Activated T-helper 2 cell treated with anti-CD3 and anti-CD28 coated beads, Interferon-gamma antibody, Interleukin-2, Interleukin-4, amounts not matched to agents 10 μg/mL and 5 μg/mL and 100 μg/mL, durations not matched to agents 14 hours and 24 hours and 36 hours (primary cell): ENCODE measurements at regions of chr21 and their contacts with region 1.

Region 1: DNA sequence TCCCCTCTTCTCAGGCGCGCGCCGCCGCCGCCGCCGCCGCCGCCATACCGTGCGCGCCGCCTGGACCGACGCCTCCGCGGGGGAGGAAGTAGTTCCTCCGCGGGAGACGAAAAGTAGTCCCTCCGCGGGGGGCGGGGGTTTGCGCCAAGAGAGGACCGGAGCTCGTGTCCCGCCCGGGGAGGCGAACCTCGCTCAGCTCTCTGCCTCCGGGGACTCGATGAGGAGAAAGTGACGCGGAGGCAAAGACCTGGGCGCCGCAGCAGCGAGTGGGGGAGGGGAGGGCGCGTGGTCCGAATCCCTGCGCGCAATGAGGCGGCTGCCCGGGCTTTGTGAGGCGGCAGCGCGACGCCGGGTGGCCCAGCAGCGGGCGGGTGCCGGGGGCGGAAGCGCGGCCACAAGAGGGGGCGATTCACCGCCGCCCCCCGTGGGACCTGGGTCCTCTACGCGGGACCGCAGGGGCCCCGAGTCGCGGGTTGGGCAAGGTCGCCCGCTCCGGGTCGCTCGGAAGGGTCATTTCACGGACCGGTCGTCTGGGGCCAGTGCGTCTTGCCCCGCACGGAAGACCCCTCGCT is at the start of gene BRWD1:
- DNase-seq: peak; percentile 83
- H3K4me3 Mint-ChIP-seq: peak within 1 kb of the TSS; percentile 93
- H3K27ac Mint-ChIP-seq: peak within 1 kb of the TSS; percentile 98
- H3K4me1 Mint-ChIP-seq: peaks cover 31% of the 10 kb centered on the region
- H3K27me3 Mint-ChIP-seq: no peaks in the 10 kb centered on the region
- total RNA-seq, gene BRWD1: 34.8 and 36.0 TPM in 2 replicates

Region 2: DNA sequence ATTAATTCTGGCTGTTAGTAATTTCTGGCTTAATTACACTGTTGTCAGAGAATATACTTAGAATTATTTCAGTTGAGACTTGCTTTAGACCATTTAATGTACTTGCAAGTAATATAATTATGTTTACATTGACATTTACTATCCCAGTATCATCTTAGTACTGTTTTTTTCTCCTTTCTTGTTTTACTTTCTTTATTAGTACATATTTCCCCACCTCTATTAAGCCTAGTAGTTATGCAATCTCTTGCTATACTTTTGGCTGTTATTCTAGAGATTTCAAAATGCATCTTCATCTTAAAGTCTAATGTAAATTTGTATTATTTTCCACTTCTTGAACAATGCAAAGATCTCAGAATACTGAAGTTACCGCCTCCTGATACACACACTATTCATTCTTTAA is 24.7 kb before region 1 on chr21:
- intact Hi-C with region 1: no loop called
- DNase-seq: no peak
- H3K4me3 Mint-ChIP-seq: no peak overlapping the region
- H3K27ac Mint-ChIP-seq: no peak overlapping the region
- H3K4me1 Mint-ChIP-seq: no peaks in the 10 kb centered on the region
- H3K27me3 Mint-ChIP-seq: no peaks in the 10 kb centered on the region

Region 3: GRCh38 chr21:39349211-39350093 is 35.8 kb after region 1 on chr21:
- intact Hi-C with region 1: loop called (anchors 1 kb)
- DNase-seq: peak; percentile 97
- H3K4me3 Mint-ChIP-seq: peak overlapping the region; percentile 99
- H3K27ac Mint-ChIP-seq: peak overlapping the region; percentile 100
- H3K4me1 Mint-ChIP-seq: peaks cover 32% of the 10 kb centered on the region
- H3K27me3 Mint-ChIP-seq: peaks cover 4% of the 10 kb centered on the region

Region 4: DNA sequence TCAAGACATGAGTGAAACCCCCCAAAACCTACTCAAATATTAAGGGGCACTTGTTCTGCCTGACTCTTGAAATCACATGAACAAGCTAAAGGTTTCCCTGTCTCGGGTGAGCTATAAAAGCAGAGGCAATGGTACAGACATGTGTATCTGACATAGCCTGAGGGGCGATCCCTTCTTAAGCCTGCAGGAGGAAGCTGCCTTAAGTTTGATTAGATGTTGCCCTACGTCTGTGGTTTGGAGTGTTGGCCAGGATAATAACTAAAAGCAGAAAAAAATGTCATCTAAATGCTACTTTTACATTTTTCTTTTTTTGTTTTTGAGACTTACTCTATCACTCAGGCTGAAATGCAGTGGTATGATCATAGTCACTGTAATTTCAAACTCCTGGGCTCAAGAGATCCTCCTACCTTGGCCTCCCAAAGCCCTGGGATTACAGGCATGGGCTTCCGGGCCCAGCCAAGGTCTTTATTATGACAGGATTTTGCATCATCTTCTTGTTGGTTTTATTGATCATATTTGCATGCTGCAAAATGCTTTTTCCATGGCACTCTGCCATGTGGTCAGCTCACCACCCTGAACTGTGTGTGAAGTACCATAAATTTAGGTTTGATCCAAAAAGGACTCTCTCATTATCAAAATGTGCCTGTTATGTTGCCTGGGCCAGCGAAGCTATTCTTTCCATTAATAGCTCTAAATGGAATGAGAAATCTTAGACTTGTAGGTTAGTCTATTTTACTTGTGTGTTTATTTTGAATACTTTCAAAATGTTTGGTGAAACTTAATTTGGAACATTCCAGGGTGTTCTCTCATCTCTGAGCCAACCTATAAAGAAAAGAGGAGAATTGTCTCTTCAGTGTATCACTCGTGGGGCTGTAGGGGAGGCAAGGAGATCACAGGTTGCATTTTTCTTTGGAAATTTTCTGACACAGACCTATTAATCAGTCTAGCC is 50.2 kb after region 1 on chr21:
- intact Hi-C with region 1: no loop called
- DNase-seq: no peak
- H3K4me3 Mint-ChIP-seq: no peak overlapping the region
- H3K27ac Mint-ChIP-seq: no peak overlapping the region
- H3K4me1 Mint-ChIP-seq: no peaks in the 10 kb centered on the region
- H3K27me3 Mint-ChIP-seq: peaks cover 12% of the 10 kb centered on the region

Region 5: DNA sequence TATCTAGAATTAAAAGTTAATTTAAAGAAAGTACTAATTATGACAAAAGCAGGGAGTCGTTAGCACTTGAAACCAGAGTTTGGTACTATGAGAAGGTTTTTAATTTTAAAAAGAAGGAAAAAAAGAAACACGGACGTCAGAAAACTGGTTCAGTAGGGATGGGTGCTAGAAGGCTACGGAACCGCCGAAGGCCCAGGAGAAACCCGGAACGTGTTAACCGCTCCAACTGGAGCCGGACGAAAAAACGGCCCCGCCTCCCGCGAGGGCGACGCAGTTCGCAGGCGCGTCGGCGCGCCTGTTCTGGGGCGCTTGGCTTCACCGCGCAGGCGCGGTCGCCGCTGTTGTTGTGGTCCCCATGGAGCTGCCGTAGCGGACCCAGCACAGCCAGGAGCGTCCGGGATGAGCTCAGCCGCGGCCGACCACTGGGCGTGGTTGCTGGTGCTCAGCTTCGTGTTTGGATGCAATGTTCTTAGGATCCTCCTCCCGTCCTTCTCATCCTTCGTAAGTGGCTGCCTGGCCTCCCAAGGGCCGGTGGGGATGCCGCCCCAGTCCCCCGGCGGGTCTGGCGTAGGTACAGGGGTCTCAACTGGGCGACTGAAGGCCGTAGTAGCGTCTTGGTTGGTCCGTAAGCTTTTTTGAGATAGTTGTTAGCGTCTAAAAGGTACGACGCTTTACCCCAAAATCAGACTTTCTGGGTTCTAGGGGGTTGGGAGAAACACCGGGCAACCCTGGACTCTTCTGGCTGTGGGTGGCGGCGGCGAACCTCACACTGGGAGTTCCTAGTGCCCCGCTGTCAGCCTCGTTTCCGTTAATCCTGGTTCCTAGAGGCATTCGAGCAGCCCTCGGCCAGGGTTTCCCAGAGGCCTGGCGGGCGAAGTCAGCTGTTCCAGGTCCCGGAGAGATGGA is 66.6 kb after region 1 on chr21:
- intact Hi-C with region 1: loop called (anchors 2 kb)
- DNase-seq: peak; percentile 92
- H3K4me3 Mint-ChIP-seq: peak overlapping the region; percentile 95
- H3K27ac Mint-ChIP-seq: peak overlapping the region; percentile 82
- H3K4me1 Mint-ChIP-seq: peaks cover 20% of the 10 kb centered on the region
- H3K27me3 Mint-ChIP-seq: peaks cover 2% of the 10 kb centered on the region

Region 6: GRCh38 chr21:39388038-39388810 is 74.6 kb after region 1 on chr21:
- intact Hi-C with region 1: loop called (anchors 1 kb)
- DNase-seq: peak; percentile 81
- H3K4me3 Mint-ChIP-seq: peak overlapping the region; percentile 84
- H3K27ac Mint-ChIP-seq: peak overlapping the region; percentile 87
- H3K4me1 Mint-ChIP-seq: peaks cover 20% of the 10 kb centered on the region
- H3K27me3 Mint-ChIP-seq: no peaks in the 10 kb centered on the region

Region 7: GRCh38 chr21:39445321-39446269 is 131.9 kb after region 1 on chr21 and contains the start of gene LCA5L:
- intact Hi-C with region 1: loop called (anchors 2 kb)
- DNase-seq: peak; percentile 88
- H3K4me3 Mint-ChIP-seq: peak within 1 kb of the TSS; percentile 89
- H3K27ac Mint-ChIP-seq: peak within 1 kb of the TSS; percentile 88
- H3K4me1 Mint-ChIP-seq: peaks cover 12% of the 10 kb centered on the region
- H3K27me3 Mint-ChIP-seq: peaks cover 40% of the 10 kb centered on the region
- total RNA-seq, gene LCA5L: 0.32 TPM in 1 of 2 replicates, not detected in the other

Region 8: DNA sequence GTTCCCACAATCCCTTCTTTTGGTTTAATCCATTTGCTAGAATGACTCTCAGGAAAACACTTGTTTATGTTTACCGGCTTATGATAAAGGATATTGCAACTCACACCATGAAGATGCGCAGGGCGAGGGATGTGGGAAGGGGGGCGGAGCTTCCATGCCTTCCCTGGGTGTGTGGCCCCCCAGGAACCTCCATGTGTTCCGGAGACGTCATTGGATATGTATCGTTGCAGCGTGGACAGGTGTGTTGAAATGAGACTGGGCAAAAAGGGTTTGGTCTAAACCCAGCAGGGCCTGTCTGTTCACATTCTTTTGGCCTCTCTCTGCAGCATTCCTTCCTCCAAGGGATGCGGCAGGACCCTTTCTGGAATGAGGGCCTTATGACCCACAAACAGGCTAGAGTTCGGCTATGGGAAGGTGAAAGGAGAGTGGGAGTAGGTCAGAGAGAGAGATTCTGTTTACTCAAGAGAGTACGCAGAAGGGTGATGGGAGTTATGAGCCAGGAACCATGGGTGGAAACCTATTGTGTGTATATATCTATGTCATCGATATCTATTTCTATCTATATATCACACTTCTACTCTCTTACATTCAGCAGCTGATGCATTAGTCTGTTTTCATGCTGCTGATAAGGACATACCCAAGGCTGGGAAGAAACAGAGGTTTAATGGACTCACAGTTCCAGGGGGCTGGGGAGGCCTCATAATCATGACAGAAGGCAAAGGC is 424.0 kb after region 1 on chr21:
- intact Hi-C with region 1: no loop called
- DNase-seq: no peak
- H3K4me3 Mint-ChIP-seq: no peak overlapping the region
- H3K27ac Mint-ChIP-seq: no peak overlapping the region
- H3K4me1 Mint-ChIP-seq: no peaks in the 10 kb centered on the region
- H3K27me3 Mint-ChIP-seq: no peaks in the 10 kb centered on the region